Endothelial cell of umbilical vein (primary cell): ENCODE measurements at regions of chr9 and their contacts with region 1.

Region 1: GRCh38 chr9:4541856-4542255 is 51.6 kb downstream of the SLC1A1 start:
- DNase-seq: peak; percentile 18
- H3K4me3 ChIP-seq: no peak overlapping the region
- H3K27ac ChIP-seq: peak overlapping the region; percentile 62
- H3K4me1 ChIP-seq: peaks cover 27% of the 10 kb centered on the region
- H3K27me3 ChIP-seq: no peaks in the 10 kb centered on the region
- CTCF ChIP-seq: no peak
- POLR2A ChIP-seq: no peak

Region 2: DNA sequence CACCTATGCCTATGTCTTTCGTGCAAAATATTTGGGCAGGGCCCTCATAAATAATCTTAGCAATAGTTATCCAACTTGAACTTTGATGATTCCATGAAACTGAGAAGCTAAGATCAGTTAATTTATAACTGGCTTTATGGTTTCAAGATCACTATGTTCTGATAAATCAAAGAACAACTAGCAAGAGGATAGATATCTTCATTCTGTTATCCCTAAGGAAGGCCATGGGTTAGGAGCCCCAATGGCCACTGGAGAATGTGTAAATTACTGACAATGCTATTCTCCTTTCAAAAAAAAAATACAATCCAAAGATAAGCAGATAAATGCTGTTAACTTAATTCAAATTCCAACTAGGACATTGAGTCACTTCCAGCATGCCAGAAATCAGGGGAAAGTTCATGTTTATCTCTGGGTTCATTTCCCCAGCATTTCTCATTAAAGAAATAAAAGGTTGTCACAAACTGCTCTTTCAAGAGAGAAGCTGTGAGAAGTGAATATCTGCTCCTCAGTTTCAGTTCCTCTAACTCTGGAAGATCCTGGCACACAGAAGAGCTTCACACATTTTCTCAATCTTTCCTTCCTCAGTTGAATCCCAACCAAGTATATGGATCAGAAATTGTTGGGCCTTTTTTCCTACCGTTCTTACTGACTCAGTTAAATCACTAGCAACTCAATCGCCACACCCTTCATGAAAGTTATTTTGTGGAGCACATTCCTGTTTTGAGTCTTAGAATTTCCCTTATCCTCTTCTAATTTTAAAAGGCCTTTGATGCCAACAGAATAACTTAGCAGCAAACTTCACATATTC is 111.2 kb before region 1 on chr9:
- CTCF ChIA-PET with region 1: no interaction called
- POLR2A ChIA-PET with region 1: no interaction called
- dilution Hi-C with region 1: no loop called
- intact Hi-C with region 1: loop called (anchors 5 kb)
- DNase-seq: peak; percentile 88
- H3K4me3 ChIP-seq: no peak overlapping the region
- H3K27ac ChIP-seq: peak overlapping the region; percentile 42
- H3K4me1 ChIP-seq: peaks cover 21% of the 10 kb centered on the region
- H3K27me3 ChIP-seq: no peaks in the 10 kb centered on the region
- CTCF ChIP-seq: no peak
- POLR2A ChIP-seq: peak; percentile 17

Region 3: GRCh38 chr9:4563105-4563504 is 21.2 kb after region 1 on chr9:
- CTCF ChIA-PET with region 1: no interaction called
- POLR2A ChIA-PET with region 1: no interaction called
- dilution Hi-C with region 1: no loop called
- intact Hi-C with region 1: no loop called
- DNase-seq: no peak
- H3K4me3 ChIP-seq: no peak overlapping the region
- H3K27ac ChIP-seq: no peak overlapping the region
- H3K4me1 ChIP-seq: peaks cover 8% of the 10 kb centered on the region
- H3K27me3 ChIP-seq: no peaks in the 10 kb centered on the region
- CTCF ChIP-seq: no peak
- POLR2A ChIP-seq: no peak